ENCODE measurements at regions of chr2 and their contacts with region 1.

Region 1: GRCh38 chr2:223993621-223994232 is 36.5 kb downstream of the MRPL44 start:
- DNase-seq: peak in 1 of 2 donors; percentile 36
- ATAC-seq: peak; percentile 68 to 74
- H3K4me3 ChIP-seq: no peak overlapping the region
- H3K27ac ChIP-seq: no peak overlapping the region
- H3K4me1 ChIP-seq: no peaks in the 10 kb centered on the region
- H3K27me3 ChIP-seq: no peaks in the 10 kb centered on the region
- CTCF ChIP-seq: peak; percentile 35 to 79 (median 61)
- POLR2A ChIP-seq: no peak

Region 2: DNA sequence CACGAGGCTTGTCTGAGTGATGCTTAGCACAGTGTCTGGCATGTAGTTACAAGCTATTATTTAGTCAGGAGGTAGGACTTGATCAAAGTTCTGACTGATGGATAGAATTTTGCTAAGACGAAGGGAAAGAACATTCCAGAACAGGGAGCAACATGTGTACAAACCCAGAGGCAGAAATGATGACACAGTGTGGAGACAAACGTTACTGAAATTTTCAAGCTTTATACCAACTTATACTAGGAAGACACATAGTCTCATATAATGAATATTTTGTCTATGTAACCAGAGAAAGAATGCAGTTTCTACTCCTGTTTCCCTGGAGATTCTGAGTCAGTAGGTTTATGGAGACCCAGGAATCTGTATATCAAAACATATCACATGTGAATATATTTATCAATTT is 284.8 kb after region 1 on chr2:
- in situ Hi-C with region 1: loop called in 2 of 4 experiments (anchors 10 kb)
- intact Hi-C with region 1: no loop called
- DNase-seq: no peak
- ATAC-seq: no peak
- H3K4me3 ChIP-seq: no peak overlapping the region
- H3K27ac ChIP-seq: no peak overlapping the region
- H3K4me1 ChIP-seq: no peaks in the 10 kb centered on the region
- H3K27me3 ChIP-seq: no peaks in the 10 kb centered on the region
- CTCF ChIP-seq: no peak
- POLR2A ChIP-seq: no peak

Region 3: DNA sequence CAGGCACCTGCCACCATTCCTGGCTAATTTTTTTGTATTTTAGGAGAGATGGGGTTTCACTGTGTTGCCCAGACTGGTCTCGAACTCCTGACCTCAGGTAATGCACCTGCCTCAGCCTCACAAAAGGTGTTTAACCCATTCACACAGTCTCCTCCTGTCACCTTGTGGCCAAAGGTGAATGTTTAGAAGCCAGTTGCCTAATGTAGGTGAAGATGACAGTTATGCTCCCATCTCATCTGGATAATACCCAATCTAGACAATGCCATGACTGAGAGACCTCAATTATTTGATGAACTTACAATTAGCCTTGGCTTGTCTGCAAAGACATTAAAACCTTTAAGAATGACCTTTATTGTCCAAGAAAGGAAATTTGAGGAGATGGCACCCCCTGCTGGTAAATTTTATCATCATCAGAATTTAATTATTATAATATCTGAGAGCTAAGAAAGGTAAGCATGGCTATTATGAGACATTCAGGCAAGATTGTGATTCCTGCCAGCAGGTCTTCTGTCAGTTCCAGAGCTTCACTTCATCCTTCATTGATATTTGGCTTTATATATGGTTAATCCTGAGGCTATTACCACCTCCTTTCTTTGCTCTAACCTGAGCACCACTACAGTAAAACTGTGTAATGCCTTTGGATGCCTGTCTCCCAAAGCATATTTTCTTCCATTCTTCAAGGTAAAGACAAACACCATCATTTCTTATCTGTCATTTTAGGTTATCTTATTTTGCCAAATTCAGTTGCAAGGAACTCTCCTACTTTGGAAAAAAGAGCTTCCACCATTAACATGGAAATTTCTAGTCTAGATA is 290.6 kb after region 1 on chr2:
- in situ Hi-C with region 1: loop called (anchors 5 to 10 kb)
- intact Hi-C with region 1: loop called (anchors 1 kb)
- DNase-seq: no peak
- ATAC-seq: no peak
- H3K4me3 ChIP-seq: no peak overlapping the region
- H3K27ac ChIP-seq: no peak overlapping the region
- H3K4me1 ChIP-seq: no peaks in the 10 kb centered on the region
- H3K27me3 ChIP-seq: peaks cover 0 to 5% (median 0%) of the 10 kb centered on the region in 3 donors
- CTCF ChIP-seq: peak; percentile 54 to 61 (median 56)
- POLR2A ChIP-seq: no peak

Region 4: GRCh38 chr2:224369028-224369632 is 375.4 kb after region 1 on chr2:
- in situ Hi-C with region 1: no loop called
- intact Hi-C with region 1: loop called (anchors 5 kb)
- DNase-seq: no peak
- ATAC-seq: no peak
- H3K4me3 ChIP-seq: no peak overlapping the region
- H3K27ac ChIP-seq: no peak overlapping the region
- H3K4me1 ChIP-seq: no peaks in the 10 kb centered on the region
- H3K27me3 ChIP-seq: no peaks in the 10 kb centered on the region
- CTCF ChIP-seq: peak in 4 of 5 experiments; percentile 32 to 69 (median 50)
- POLR2A ChIP-seq: no peak

Measured in gastrocnemius medialis (tissue), 4 donors.